ENCODE measurements at regions of chr3 and their contacts with region 1.

Region 1: DNA sequence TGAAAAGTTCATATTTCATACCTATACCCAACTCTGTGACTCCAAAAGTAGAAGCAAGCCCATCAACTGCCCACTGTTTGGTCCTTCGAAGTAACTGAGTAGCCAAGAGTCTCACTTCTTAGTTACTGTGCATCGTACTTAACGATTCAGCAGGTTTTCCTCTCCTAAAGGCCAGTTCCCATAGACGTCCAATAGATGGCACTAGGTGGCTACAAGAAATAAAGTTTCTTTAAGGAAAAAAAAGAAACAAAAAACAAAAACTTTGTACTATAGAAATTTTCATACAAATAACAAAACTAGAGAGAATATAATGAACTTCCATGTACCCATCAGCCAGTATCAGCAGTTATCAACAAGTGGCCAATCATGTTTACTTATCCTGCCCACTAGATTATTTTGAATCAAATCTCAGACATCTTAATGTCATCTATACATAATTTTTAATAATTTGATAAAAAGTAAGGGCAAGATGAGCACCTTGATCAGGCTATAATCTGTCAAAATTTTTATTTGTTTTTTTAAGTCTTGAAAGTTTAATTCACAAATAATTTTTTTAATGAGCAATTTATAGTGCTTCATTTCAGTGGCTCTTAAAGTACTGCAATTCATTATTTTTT is 63.8 kb upstream of the ACP3 start:
- DNase-seq: peak; percentile 60
- H3K4me3 ChIP-seq: no peak overlapping the region
- CTCF ChIP-seq: peak; percentile 88

Region 2: GRCh38 chr3:132283440-132283839 is 30.1 kb after region 1 on chr3:
- in situ Hi-C with region 1: loop called (anchors 5 kb)
- DNase-seq: no peak
- H3K4me3 ChIP-seq: no peak overlapping the region
- CTCF ChIP-seq: no peak

Region 3: DNA sequence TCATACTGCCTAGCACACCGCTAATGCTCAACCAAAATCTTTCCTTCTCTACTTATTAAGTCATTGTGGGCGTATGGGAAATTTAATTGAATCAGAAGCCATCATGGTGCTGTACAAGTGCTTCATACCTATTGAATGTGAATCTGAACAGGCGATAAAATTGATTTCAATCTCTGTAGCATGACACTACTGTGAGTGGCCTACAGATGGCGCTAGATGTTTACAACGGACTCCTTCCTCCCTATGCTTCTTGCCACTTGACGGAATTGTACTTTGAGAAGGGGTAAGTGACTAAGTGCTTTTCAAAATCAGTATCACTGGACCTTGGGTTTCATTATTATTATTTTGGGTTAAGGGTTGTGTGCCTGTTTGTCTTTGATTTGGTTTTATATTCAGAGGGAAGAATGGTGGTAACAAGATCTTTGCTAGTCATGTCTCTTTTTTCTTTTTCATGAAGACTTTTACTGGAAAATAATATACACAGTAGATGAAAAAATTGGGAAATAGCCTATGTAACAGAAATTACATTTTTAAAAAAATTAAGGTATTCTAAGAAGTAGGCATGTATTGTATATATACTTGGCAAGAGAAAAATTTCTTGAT is 99.3 kb after region 1 on chr3:
- in situ Hi-C with region 1: no loop called
- DNase-seq: peak; percentile 36
- H3K4me3 ChIP-seq: no peak overlapping the region
- CTCF ChIP-seq: peak; percentile 91

Region 4: GRCh38 chr3:132368962-132369361 is 115.6 kb after region 1 on chr3:
- in situ Hi-C with region 1: no loop called
- DNase-seq: no peak
- H3K4me3 ChIP-seq: no peak overlapping the region
- CTCF ChIP-seq: no peak